AG04450 (cell line): ENCODE measurements at regions of chr9 and their contacts with region 1.

Region 1: DNA sequence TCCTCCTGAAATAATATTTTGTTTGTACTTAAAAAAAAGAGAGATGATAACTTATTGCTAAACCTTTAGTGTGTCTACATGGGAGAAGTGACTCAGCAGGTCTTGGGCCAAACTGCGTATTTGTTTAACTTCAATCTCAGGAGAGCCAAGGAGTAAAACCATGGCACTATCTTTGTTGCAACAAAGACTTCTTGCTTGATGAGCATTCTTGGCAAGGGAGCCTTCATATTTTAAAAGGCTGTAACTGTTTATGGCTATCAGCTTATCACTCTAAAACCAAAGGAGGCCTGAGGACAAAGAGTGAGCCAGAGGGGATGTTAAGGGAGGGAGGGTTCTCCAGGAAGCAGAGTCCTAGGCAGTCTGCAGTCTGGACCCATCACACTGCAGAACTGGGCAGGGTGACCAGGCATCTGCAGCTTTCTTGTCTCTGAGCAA is 216.2 kb upstream of the S1PR3 start:
- DNase-seq: peak; percentile 85
- H3K4me3 ChIP-seq: no peak overlapping the region
- H3K27ac ChIP-seq: peak overlapping the region; percentile 96
- H3K27me3 ChIP-seq: no peaks in the 10 kb centered on the region
- CTCF ChIP-seq: no peak

Region 2: GRCh38 chr9:88746029-88746742 is 28.9 kb before region 1 on chr9:
- CTCF ChIA-PET with region 1: no interaction called
- POLR2A ChIA-PET with region 1: interaction called, 14 read pairs
- DNase-seq: peak; percentile 81
- H3K4me3 ChIP-seq: no peak overlapping the region
- H3K27ac ChIP-seq: peak overlapping the region; percentile 90
- H3K27me3 ChIP-seq: no peaks in the 10 kb centered on the region
- CTCF ChIP-seq: no peak

Region 3: GRCh38 chr9:88932766-88933165 is 157.7 kb after region 1 on chr9:
- CTCF ChIA-PET with region 1: no interaction called
- POLR2A ChIA-PET with region 1: no interaction called
- DNase-seq: no peak
- H3K4me3 ChIP-seq: no peak overlapping the region
- H3K27ac ChIP-seq: no peak overlapping the region
- H3K27me3 ChIP-seq: peaks cover 7% of the 10 kb centered on the region
- CTCF ChIP-seq: no peak